CD4-positive, alpha-beta memory T cell (primary cell): ENCODE measurements at regions of chr14 and their contacts with region 1.

Region 1: GRCh38 chr14:74860906-74861733 is 14.8 kb downstream of the PROX2 start:
- DNase-seq: peak; percentile 79 to 85 (median 85)
- H3K4me3 ChIP-seq: no peak overlapping the region
- H3K4me3 Mint-ChIP-seq: no peak overlapping the region
- H3K27ac ChIP-seq: no peak overlapping the region
- H3K27ac Mint-ChIP-seq: peak overlapping the region in 1 of 7 donors; percentile 25
- H3K4me1 ChIP-seq: peaks cover 6% of the 10 kb centered on the region
- H3K4me1 Mint-ChIP-seq: peaks cover 3 to 9% (median 4%) of the 10 kb centered on the region in 4 donors
- H3K27me3 ChIP-seq: no peaks in the 10 kb centered on the region
- H3K27me3 Mint-ChIP-seq: no peaks in the 10 kb centered on the region

Region 2: GRCh38 chr14:74841230-74842207 is 19.6 kb before region 1 on chr14:
- CTCF ChIA-PET with region 1: interaction called, 84 read pairs
- POLR2A ChIA-PET with region 1: interaction called, 8 read pairs
- intact Hi-C with region 1: no loop called
- DNase-seq: peak in 4 of 5 donors; percentile 16 to 31 (median 28)
- H3K4me3 ChIP-seq: peak overlapping the region in 1 of 2 donors; percentile 22
- H3K4me3 Mint-ChIP-seq: peak overlapping the region; percentile 35 to 73 (median 59)
- H3K27ac ChIP-seq: peak overlapping the region; percentile 14
- H3K27ac Mint-ChIP-seq: peak overlapping the region; percentile 85 to 96 (median 89)
- H3K4me1 ChIP-seq: peaks cover 59% of the 10 kb centered on the region
- H3K4me1 Mint-ChIP-seq: peaks cover 43 to 65% (median 53%) of the 10 kb centered on the region in 4 donors
- H3K27me3 ChIP-seq: no peaks in the 10 kb centered on the region
- H3K27me3 Mint-ChIP-seq: no peaks in the 10 kb centered on the region

Region 3: DNA sequence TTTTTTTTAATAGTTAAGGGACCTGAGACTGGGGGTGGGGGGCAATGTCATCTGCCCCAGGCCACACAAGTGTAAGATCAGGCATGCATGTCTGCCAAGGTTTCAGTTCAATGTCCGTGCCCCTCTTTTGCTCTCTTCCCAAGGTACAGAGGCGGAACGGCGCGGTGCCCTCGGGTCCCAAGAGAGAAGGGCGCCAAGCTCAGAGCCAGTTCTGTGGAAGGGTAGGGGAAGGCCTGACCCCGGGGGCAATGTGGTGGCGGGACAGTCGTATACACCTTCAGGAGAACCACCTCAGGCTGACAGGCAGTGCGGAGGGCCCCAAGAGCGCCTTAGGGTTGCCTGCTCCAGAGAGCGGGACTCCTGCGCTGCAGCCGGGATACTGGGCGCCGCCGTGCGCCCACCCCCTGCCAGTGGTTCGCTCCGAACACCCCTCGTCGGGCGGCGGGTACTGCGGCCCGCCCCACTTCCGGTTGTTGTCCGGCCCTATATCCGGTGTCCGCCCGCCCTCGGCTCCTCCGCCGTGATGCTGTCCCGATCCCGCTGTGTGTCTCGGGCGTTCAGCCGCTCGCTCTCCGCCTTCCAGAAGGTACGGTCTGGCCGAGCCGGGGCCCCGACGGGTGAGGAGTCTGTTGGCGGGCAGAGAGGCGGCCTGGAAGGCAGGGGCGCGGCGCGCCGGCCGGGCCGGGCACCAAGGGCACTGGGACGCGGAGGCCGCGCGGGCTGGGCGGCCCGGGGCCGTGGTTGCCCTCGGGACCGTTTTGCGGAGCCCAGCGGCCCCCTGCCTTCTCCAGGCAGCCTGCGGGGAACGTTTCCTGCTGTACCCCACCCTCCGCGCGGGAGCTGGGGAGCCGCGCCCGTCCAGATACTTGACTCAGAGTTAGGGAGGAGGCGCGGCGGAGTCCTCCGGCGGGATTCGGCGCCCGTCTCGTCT is 20.6 kb after region 1 on chr14 and contains the start of gene DLST:
- CTCF ChIA-PET with region 1: interaction called, 253 read pairs
- POLR2A ChIA-PET with region 1: interaction called, 22 read pairs
- intact Hi-C with region 1: loop called (anchors 2 kb)
- DNase-seq: peak; percentile 82 to 87 (median 83)
- H3K4me3 ChIP-seq: peak within 1 kb of the TSS; percentile 44 to 98
- H3K4me3 Mint-ChIP-seq: peak within 1 kb of the TSS; percentile 96 to 100 (median 99)
- H3K27ac ChIP-seq: peak within 1 kb of the TSS; percentile 87
- H3K27ac Mint-ChIP-seq: peak within 1 kb of the TSS; percentile 93 to 100 (median 100)
- H3K4me1 ChIP-seq: peaks cover 53% of the 10 kb centered on the region
- H3K4me1 Mint-ChIP-seq: peaks cover 48 to 75% (median 62%) of the 10 kb centered on the region in 4 donors
- H3K27me3 ChIP-seq: no peaks in the 10 kb centered on the region
- H3K27me3 Mint-ChIP-seq: no peaks in the 10 kb centered on the region
- total RNA-seq, gene DLST: 101 to 104 TPM

Region 4: GRCh38 chr14:74893614-74894091 is 32.5 kb after region 1 on chr14:
- CTCF ChIA-PET with region 1: interaction called, 677 read pairs
- POLR2A ChIA-PET with region 1: interaction called, 3 read pairs
- intact Hi-C with region 1: no loop called
- DNase-seq: no peak
- H3K4me3 ChIP-seq: no peak overlapping the region
- H3K4me3 Mint-ChIP-seq: no peak overlapping the region
- H3K27ac ChIP-seq: no peak overlapping the region
- H3K27ac Mint-ChIP-seq: peak overlapping the region in 4 of 7 donors; percentile 4 to 51 (median 36)
- H3K4me1 ChIP-seq: peaks cover 2% of the 10 kb centered on the region
- H3K4me1 Mint-ChIP-seq: peaks cover 4 to 10% (median 9%) of the 10 kb centered on the region in 4 donors
- H3K27me3 ChIP-seq: no peaks in the 10 kb centered on the region
- H3K27me3 Mint-ChIP-seq: no peaks in the 10 kb centered on the region

Region 5: DNA sequence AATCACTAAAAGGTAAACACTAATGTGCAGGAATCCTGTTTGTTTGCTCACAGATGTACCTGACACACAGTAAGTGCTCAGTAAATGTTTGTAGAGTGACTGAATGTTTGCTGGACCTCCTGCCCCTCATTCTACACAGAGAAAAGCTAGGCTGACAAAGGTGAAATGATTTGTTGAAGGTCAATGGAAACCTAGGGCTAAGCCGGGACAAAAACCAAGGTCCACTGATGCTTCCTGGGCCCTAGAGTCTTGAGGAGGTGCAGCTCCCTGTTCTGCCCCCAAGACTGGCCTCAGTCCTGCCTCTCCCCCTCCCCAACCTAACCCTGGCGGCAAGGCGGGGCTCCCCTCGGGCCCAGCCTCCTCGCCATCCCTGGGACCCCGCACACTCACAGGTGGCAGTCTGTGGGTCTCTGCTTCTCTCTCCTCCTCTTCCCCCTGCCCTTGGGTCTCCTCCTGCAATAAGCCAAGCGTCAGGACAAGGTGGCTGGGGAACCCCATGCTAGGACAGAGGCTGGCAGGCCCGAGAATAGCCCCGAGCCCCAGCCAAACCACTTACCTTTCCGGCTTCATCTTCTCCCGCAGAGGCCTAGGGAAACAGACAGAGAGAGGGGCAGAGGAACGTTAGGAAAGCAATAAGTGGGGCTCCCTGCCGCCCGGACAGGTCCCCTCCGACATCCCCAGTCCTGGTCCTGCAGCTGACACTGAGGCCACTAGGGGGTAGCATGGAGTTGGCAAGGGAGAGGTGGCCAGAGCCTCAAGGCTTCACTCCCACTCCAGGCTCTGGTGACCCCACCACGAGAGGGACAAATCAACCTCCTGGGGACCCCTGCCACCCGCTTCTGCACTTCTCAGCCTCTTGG is 84.9 kb after region 1 on chr14:
- CTCF ChIA-PET with region 1: interaction called, 14 read pairs
- POLR2A ChIA-PET with region 1: no interaction called
- intact Hi-C with region 1: no loop called
- DNase-seq: peak; percentile 62 to 74 (median 63)
- H3K4me3 ChIP-seq: no peak overlapping the region
- H3K4me3 Mint-ChIP-seq: peak overlapping the region in 5 of 8 donors; percentile 22 to 81 (median 63)
- H3K27ac ChIP-seq: no peak overlapping the region
- H3K27ac Mint-ChIP-seq: peak overlapping the region; percentile 21 to 93 (median 70)
- H3K4me1 ChIP-seq: peaks cover 37% of the 10 kb centered on the region
- H3K4me1 Mint-ChIP-seq: peaks cover 13 to 32% (median 30%) of the 10 kb centered on the region in 4 donors
- H3K27me3 ChIP-seq: no peaks in the 10 kb centered on the region
- H3K27me3 Mint-ChIP-seq: peaks cover 0 to 2% of the 10 kb centered on the region in 2 donors

Region 6: DNA sequence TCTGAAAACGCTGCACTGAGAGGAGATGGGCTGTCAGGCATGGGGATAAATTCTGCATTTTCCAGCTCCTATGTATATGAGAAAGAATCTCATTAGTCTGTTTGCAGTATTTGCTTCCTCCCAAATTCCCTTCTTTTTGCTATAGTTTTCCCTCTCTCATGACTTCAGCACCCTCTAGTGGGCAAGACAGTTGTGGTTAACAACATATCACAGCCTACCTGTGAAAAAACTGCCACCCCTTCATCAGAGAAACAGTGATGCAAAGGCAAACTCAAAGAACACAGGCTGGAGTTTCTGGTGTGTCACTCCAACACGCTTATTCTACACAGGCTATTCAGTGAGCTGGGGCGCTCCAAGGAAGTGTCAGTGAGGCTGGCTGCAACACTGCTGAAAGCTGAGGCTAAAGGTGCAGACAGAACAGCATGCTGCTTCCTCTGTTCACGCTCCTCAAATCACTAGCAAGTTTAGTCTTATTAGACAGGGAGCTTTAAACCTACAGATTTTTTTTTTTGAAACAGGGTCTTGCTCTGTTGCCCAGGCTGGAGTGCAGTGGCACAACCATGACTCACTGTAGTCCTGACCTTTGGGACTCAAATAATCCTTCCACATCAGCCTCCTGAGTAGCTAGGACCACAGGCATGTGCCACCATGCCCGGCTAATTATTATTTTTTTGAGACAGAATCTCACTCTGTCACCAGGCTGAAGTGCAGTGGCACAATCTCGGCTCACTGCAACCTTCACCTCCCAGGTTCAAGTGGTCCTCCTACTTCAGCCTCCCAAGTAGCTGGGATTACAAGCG is 227.7 kb after region 1 on chr14:
- CTCF ChIA-PET with region 1: interaction called, 121 read pairs
- POLR2A ChIA-PET with region 1: interaction called, 7 read pairs
- intact Hi-C with region 1: loop called (anchors 1 kb)
- DNase-seq: peak; percentile 37 to 48 (median 46)
- H3K4me3 ChIP-seq: no peak overlapping the region
- H3K4me3 Mint-ChIP-seq: no peak overlapping the region
- H3K27ac ChIP-seq: no peak overlapping the region
- H3K27ac Mint-ChIP-seq: peak overlapping the region in 1 of 7 donors; percentile 47
- H3K4me1 ChIP-seq: no peaks in the 10 kb centered on the region
- H3K4me1 Mint-ChIP-seq: no peaks in the 10 kb centered on the region
- H3K27me3 ChIP-seq: no peaks in the 10 kb centered on the region
- H3K27me3 Mint-ChIP-seq: no peaks in the 10 kb centered on the region

Region 7: DNA sequence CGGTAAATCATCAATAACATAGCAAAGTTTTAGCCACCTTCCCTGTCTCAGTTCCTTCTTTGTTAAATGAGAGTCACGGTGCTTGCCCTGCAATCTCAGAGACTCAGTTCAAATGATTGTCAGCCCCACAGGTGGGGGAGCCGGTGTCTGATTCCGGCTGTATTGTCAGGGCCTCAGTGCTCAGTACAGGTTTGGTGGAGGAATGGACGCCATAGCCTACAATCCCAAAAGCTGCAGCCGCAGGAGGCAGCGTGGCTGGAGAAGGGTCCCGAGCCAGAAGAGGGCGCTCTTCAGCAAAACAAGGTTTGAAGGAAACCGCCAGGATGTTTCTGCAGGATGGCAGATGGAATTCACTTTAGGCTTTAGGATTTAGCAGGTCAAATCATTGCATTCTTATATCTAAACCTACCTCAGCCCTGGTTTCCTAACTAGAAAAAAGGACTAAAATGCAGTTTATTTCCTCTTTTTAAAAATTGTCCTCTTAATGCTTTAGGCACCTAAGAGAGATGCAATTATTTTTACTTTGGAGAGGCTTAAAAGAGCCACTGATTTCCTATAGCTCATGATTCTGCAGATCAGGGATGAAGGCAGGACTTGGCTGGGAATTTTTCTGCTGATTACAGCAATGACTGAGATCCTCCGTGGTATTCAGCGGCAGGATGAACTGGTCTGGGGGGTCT is 446.7 kb after region 1 on chr14:
- CTCF ChIA-PET with region 1: no interaction called
- POLR2A ChIA-PET with region 1: no interaction called
- intact Hi-C with region 1: loop called (anchors 1 kb)
- DNase-seq: peak; percentile 56 to 68 (median 63)
- H3K4me3 ChIP-seq: no peak overlapping the region
- H3K4me3 Mint-ChIP-seq: peak overlapping the region in 1 of 8 donors; percentile 26
- H3K27ac ChIP-seq: no peak overlapping the region
- H3K27ac Mint-ChIP-seq: no peak overlapping the region
- H3K4me1 ChIP-seq: peaks cover 6% of the 10 kb centered on the region
- H3K4me1 Mint-ChIP-seq: peaks cover 4 to 19% (median 8%) of the 10 kb centered on the region in 4 donors
- H3K27me3 ChIP-seq: no peaks in the 10 kb centered on the region
- H3K27me3 Mint-ChIP-seq: peaks cover 1 to 3% of the 10 kb centered on the region in 2 donors